Activated CD4-positive, alpha-beta T cell treated with anti-CD3 and anti-CD28 coated beads for 36 hours (primary cell): ENCODE measurements at regions of chr16 and their contacts with region 1.

Region 1: DNA sequence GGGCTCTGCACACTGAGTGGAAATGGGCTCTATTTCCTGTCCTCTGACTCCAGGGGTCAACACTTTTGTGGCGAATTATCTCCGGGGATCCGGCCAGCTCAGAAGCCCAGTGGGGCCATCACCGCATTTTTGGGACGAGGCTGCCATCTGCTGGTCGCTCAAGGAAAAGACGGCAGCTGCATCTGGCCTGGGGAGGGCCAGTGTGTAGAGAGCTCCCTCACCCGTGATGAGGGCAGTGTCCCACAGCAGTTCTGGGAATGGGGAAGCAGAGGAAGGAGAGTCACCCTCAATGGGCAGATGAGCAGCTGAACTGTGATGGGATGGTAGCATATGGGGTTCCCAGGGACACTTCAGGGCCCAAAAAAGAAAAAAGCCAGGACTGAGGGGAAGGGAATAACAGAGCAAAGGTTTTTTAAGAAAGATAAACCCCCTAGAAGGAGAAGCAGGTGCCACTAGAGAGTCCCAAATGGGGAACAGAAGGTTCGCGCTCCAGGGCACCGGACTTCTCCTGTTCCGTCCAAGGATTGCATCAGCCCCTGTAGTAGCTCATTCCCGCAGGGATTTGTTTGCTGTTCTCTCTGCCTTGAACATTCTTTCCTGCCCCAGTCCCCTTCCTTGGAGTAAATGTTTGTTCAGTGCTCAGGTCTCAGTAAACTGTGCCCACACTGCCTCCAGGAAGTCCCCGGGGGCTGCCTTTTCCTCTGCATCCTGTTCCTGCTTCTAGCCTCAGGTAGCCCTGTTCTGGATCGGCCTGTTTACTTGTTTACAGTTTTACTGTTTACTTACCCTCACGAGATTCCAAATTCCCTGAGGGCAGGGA is 9.3 kb upstream of the ABCC12 start:
- DNase-seq: peak; percentile 82
- ATAC-seq: peak; percentile 92
- H3K4me3 Mint-ChIP-seq: no peak overlapping the region
- H3K27ac Mint-ChIP-seq: no peak overlapping the region
- H3K4me1 Mint-ChIP-seq: peaks cover 4% of the 10 kb centered on the region
- H3K27me3 Mint-ChIP-seq: peaks cover 17% of the 10 kb centered on the region

Region 2: GRCh38 chr16:46555951-46556350 is 1609.2 kb before region 1 on chr16:
- CTCF ChIA-PET with region 1: interaction called, 7 read pairs
- POLR2A ChIA-PET with region 1: no interaction called
- intact Hi-C with region 1: loop called in 1 of 2 experiments (anchors 10 kb)
- DNase-seq: no peak
- ATAC-seq: no peak
- H3K4me3 Mint-ChIP-seq: no peak overlapping the region
- H3K27ac Mint-ChIP-seq: no peak overlapping the region
- H3K4me1 Mint-ChIP-seq: no peaks in the 10 kb centered on the region
- H3K27me3 Mint-ChIP-seq: peaks cover 7% of the 10 kb centered on the region

Region 3: DNA sequence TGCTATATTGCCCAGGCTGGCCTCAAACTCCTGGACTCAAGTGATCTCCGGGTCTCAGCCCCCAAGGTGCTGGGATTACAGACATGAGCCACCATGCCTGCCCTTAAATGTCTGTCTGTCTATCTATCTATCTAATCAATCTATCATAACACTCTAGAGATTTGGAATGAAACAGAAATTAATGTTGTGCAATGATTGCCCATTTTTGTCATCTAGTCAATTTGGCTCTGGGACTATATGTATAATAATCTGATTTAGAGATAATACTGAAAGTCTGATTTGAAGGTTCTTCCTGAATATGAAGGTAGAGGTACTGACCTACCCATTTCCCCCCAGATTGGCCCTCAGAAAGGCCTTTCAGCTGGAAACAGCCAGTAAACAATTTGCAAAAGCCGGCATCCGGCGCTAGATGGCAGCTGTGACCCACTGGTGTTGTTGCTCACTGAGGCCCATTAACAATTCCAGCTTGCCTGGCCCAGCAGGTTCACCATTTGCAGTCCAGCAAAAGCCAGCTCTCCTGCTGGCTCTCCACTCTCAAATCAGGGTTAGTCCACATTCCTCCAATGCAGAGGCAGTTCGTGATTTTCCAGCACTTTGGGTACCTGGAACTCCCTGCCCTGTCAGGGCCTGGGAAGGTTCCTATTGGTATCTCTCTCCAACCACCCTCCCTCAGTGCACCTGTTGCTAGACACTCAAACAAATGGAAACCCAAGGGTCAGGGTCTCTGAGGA is 1311.2 kb before region 1 on chr16:
- CTCF ChIA-PET with region 1: no interaction called
- POLR2A ChIA-PET with region 1: no interaction called
- intact Hi-C with region 1: loop called in 1 of 2 experiments (anchors 5 kb)
- DNase-seq: peak; percentile 80
- ATAC-seq: no peak
- H3K4me3 Mint-ChIP-seq: no peak overlapping the region
- H3K27ac Mint-ChIP-seq: no peak overlapping the region
- H3K4me1 Mint-ChIP-seq: no peaks in the 10 kb centered on the region
- H3K27me3 Mint-ChIP-seq: no peaks in the 10 kb centered on the region

Region 4: GRCh38 chr16:46947900-46948547 is 1217.1 kb before region 1 on chr16:
- CTCF ChIA-PET with region 1: interaction called, 7 read pairs
- POLR2A ChIA-PET with region 1: no interaction called
- intact Hi-C with region 1: loop called in 1 of 2 experiments (anchors 2 kb)
- DNase-seq: peak; percentile 56
- ATAC-seq: peak; percentile 64
- H3K4me3 Mint-ChIP-seq: no peak overlapping the region
- H3K27ac Mint-ChIP-seq: peak overlapping the region; percentile 70
- H3K4me1 Mint-ChIP-seq: peaks cover 22% of the 10 kb centered on the region
- H3K27me3 Mint-ChIP-seq: no peaks in the 10 kb centered on the region

Region 5: DNA sequence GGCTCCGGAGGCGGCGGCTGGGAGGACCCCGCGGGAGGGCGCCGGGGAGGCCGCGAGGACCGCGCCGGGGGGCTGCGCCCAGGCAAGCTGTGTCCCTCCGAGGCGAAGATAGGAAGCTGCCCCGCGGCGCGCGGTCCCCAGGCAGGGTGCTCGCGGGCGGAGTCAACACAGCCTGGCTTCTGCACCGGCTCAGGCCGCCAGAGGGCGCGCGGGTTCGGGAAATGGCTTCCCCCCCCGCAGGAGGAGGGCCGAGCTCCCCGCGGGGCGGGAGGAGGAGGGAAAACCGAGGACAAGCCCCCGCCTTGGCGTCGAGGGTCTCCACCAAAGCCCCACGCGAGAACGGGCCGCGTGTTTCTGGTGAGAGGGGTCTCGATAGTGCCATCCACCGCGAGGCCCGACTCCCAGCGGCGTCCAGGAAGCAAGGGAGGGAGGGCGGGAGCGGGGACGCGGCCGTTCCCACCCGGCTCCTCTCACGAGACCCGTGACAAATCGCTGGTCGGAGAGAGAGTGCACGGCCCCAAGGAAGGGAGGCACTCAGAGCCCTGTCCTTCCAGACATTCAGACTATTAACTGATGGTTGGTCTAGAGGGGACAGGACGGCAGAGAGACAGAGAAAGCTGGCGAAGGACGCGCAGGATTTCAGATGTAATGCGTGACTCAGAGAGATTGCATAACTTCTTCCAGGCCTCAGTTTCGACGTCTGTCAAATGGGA is 1127.2 kb before region 1 on chr16:
- CTCF ChIA-PET with region 1: interaction called, 11 read pairs
- POLR2A ChIA-PET with region 1: no interaction called
- intact Hi-C with region 1: loop called in 1 of 2 experiments (anchors 1 kb)
- DNase-seq: peak; percentile 94
- ATAC-seq: peak; percentile 98
- H3K4me3 Mint-ChIP-seq: peak overlapping the region; percentile 65
- H3K27ac Mint-ChIP-seq: no peak overlapping the region
- H3K4me1 Mint-ChIP-seq: peaks cover 2% of the 10 kb centered on the region
- H3K27me3 Mint-ChIP-seq: peaks cover 8% of the 10 kb centered on the region

Region 6: GRCh38 chr16:47553853-47554564 is 611.1 kb before region 1 on chr16:
- CTCF ChIA-PET with region 1: no interaction called
- POLR2A ChIA-PET with region 1: no interaction called
- intact Hi-C with region 1: no loop called
- DNase-seq: no peak
- ATAC-seq: no peak
- H3K4me3 Mint-ChIP-seq: no peak overlapping the region
- H3K27ac Mint-ChIP-seq: no peak overlapping the region
- H3K4me1 Mint-ChIP-seq: no peaks in the 10 kb centered on the region
- H3K27me3 Mint-ChIP-seq: no peaks in the 10 kb centered on the region

Region 7: GRCh38 chr16:47873434-47873833 is 291.7 kb before region 1 on chr16:
- CTCF ChIA-PET with region 1: no interaction called
- POLR2A ChIA-PET with region 1: no interaction called
- intact Hi-C with region 1: loop called in 1 of 2 experiments (anchors 2 kb)
- DNase-seq: peak; percentile 11
- ATAC-seq: no peak
- H3K4me3 Mint-ChIP-seq: no peak overlapping the region
- H3K27ac Mint-ChIP-seq: no peak overlapping the region
- H3K4me1 Mint-ChIP-seq: no peaks in the 10 kb centered on the region
- H3K27me3 Mint-ChIP-seq: peaks cover 4% of the 10 kb centered on the region

Region 8: DNA sequence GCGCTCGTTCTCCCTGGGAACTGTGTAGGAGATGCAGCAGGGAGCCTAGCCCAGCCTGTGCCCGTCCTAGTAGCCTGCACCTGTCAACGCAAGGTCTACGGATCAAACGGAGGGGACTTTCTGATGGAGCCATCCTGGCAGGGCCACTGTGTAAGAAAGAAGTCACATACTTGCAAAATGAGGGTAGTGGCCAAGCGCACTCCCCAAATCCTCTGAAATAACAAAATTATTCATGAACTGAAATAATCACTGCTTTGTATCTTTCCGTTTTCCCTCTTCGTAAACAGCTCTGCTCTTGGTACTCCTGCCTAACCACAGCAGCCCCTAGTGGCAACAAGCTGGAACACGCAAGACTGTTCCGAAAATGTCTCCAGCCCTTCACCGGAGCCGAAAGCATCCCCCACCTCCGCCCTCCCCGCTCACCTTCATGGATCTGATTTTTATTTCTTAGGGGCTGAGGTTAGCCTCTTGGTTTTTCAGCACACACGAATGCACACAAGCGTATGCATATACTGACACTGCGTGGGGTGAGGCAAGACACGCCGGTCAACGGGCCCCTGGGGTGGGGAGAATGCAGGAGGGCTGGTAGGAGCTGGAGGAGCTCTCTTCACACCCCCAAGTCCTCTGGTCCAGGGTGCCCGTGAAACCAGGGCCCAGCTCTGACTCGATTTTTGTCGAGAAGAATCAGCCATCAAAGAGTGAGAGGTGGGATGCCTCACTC is 110.1 kb before region 1 on chr16:
- CTCF ChIA-PET with region 1: interaction called, 5 read pairs
- POLR2A ChIA-PET with region 1: no interaction called
- intact Hi-C with region 1: loop called in 1 of 2 experiments (anchors 2 kb)
- DNase-seq: peak; percentile 64
- ATAC-seq: peak; percentile 61
- H3K4me3 Mint-ChIP-seq: no peak overlapping the region
- H3K27ac Mint-ChIP-seq: no peak overlapping the region
- H3K4me1 Mint-ChIP-seq: peaks cover 5% of the 10 kb centered on the region
- H3K27me3 Mint-ChIP-seq: peaks cover 20% of the 10 kb centered on the region